IMR-90 (cell line): ENCODE measurements at regions of chr12 and their contacts with region 1.

Region 1: GRCh38 chr12:49998453-49998852 is 25.7 kb downstream of the AQP6 start:
- DNase-seq: no peak
- ATAC-seq: no peak
- H3K4me3 ChIP-seq: no peak overlapping the region
- H3K27ac ChIP-seq: no peak overlapping the region; the same call in 1 of the 2 replicates
- H3K4me1 ChIP-seq: no peaks in the 10 kb centered on the region; the same call in 1 of the 2 replicates
- H3K27me3 ChIP-seq: no peaks in the 10 kb centered on the region
- CTCF ChIP-seq: no peak
- POLR2A ChIP-seq: no peak
- RAD21 ChIP-seq: no peak

Region 2: GRCh38 chr12:49251357-49251756 is 747.1 kb before region 1 on chr12:
- CTCF ChIA-PET with region 1: no interaction called
- POLR2A ChIA-PET with region 1: interaction called, 14 read pairs
- dilution Hi-C with region 1: no loop called
- in situ Hi-C with region 1: no loop called
- intact Hi-C with region 1: no loop called
- DNase-seq: no peak
- ATAC-seq: no peak
- H3K4me3 ChIP-seq: no peak overlapping the region
- H3K27ac ChIP-seq: no peak overlapping the region
- H3K4me1 ChIP-seq: peaks cover 3% of the 10 kb centered on the region; the same call in 1 of the 2 replicates
- H3K27me3 ChIP-seq: no peaks in the 10 kb centered on the region
- CTCF ChIP-seq: no peak
- POLR2A ChIP-seq: no peak
- RAD21 ChIP-seq: no peak

Region 3: GRCh38 chr12:49623142-49623904 is 375.1 kb before region 1 on chr12 and contains the start of gene PRPF40B:
- CTCF ChIA-PET with region 1: no interaction called
- POLR2A ChIA-PET with region 1: no interaction called
- dilution Hi-C with region 1: no loop called
- in situ Hi-C with region 1: no loop called
- intact Hi-C with region 1: no loop called
- DNase-seq: peak; percentile 73
- ATAC-seq: peak; percentile 92
- H3K4me3 ChIP-seq: peak within 1 kb of the TSS; percentile 60
- H3K27ac ChIP-seq: peak within 1 kb of the TSS; percentile 24
- H3K4me1 ChIP-seq: peaks cover 11% of the 10 kb centered on the region
- H3K27me3 ChIP-seq: no peaks in the 10 kb centered on the region
- CTCF ChIP-seq: peak; percentile 73
- POLR2A ChIP-seq: peak; percentile 81
- RAD21 ChIP-seq: peak; percentile 19
- total RNA-seq, gene PRPF40B: 3.9 and 5.0 TPM in 2 replicates

Region 4: GRCh38 chr12:49866859-49867579 is 131.4 kb before region 1 on chr12:
- CTCF ChIA-PET with region 1: no interaction called
- POLR2A ChIA-PET with region 1: no interaction called
- dilution Hi-C with region 1: no loop called
- in situ Hi-C with region 1: no loop called
- intact Hi-C with region 1: no loop called
- DNase-seq: peak; percentile 46
- ATAC-seq: peak; percentile 25; the same call in 1 of the 2 replicates
- H3K4me3 ChIP-seq: no peak overlapping the region
- H3K27ac ChIP-seq: no peak overlapping the region
- H3K4me1 ChIP-seq: peaks cover 23% of the 10 kb centered on the region
- H3K27me3 ChIP-seq: peaks cover 22% of the 10 kb centered on the region
- CTCF ChIP-seq: peak; percentile 83
- POLR2A ChIP-seq: no peak
- RAD21 ChIP-seq: peak; percentile 86